B cell (primary cell): ENCODE measurements at regions of chr5 and their contacts with region 1.

Region 1: GRCh38 chr5:141923448-141924352 is at the start of gene DELE1:
- DNase-seq: peak; percentile 94
- ATAC-seq: peak; percentile 94
- H3K4me3 ChIP-seq: peak within 1 kb of the TSS; percentile 63 to 92 (median 85)
- H3K4me3 Mint-ChIP-seq: peak within 1 kb of the TSS; percentile 92
- H3K27ac ChIP-seq: peak within 1 kb of the TSS; percentile 95 to 98
- H3K27ac Mint-ChIP-seq: peak within 1 kb of the TSS; percentile 96
- H3K4me1 ChIP-seq: peaks cover 12 to 18% of the 10 kb centered on the region in 2 donors
- H3K4me1 Mint-ChIP-seq: peaks cover 20% of the 10 kb centered on the region
- H3K27me3 ChIP-seq: no peaks in the 10 kb centered on the region
- H3K27me3 Mint-ChIP-seq: no peaks in the 10 kb centered on the region
- CTCF ChIP-seq: no peak
- total RNA-seq, gene DELE1: 124 and 134 TPM in 2 replicates

Region 2: DNA sequence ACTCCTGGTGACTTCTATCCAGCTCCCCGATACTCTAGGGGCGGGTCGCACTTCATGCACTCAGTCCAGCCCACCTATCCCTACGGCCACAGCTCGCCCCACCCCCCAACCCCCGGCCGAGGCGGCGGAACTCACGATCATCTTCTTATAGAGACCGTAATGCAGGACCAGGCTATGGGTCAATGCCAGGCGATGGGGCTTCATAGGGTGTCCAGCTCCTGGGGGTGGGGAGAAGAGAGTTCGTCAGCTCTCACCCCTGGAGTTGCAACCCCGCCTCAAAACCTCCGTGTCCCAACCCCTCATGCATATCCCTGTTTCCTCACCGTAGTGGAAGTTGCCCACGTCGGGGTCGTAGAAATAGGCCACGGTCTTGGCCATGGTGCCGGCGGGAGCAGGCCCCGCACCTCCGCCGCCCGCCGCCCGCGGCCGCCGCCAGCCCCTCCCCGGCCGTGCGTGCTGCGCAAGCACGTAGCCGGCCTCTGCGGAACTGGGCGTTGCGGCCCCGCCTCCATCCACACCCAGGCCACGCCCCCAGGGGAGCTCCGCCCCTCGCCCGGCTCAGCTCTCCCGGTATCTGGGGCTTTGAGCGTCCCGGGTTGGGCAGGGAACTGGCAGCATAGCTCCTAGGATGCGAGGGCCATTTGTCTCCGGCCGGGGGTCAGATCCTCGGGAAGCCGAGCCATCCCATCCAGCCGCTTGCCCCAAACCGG is 287.1 kb before region 1 on chr5 and contains the starts of genes HDAC3 and RELL2:
- CTCF ChIA-PET with region 1: no interaction called
- POLR2A ChIA-PET with region 1: no interaction called
- intact Hi-C with region 1: loop called (anchors 1 kb)
- DNase-seq: peak; percentile 94
- ATAC-seq: peak; percentile 89
- H3K4me3 ChIP-seq: peak within 1 kb of the TSS; percentile 70 to 99 (median 82)
- H3K4me3 Mint-ChIP-seq: peak within 1 kb of the TSS; percentile 94
- H3K27ac ChIP-seq: peak within 1 kb of the TSS; percentile 58 to 77
- H3K27ac Mint-ChIP-seq: peak within 1 kb of the TSS; percentile 85
- H3K4me1 ChIP-seq: peaks cover 30 to 36% of the 10 kb centered on the region in 2 donors
- H3K4me1 Mint-ChIP-seq: peaks cover 39% of the 10 kb centered on the region
- H3K27me3 ChIP-seq: no peaks in the 10 kb centered on the region
- H3K27me3 Mint-ChIP-seq: no peaks in the 10 kb centered on the region
- CTCF ChIP-seq: no peak
- total RNA-seq, gene HDAC3: 85.5 and 86.9 TPM in 2 replicates
- total RNA-seq, gene RELL2: 11.6 and 12.1 TPM in 2 replicates

Region 3: GRCh38 chr5:141650851-141651727 is 272.6 kb before region 1 on chr5 and contains the start of gene FCHSD1:
- CTCF ChIA-PET with region 1: no interaction called
- POLR2A ChIA-PET with region 1: no interaction called
- intact Hi-C with region 1: loop called (anchors 1 kb)
- DNase-seq: peak; percentile 89
- ATAC-seq: peak; percentile 100
- H3K4me3 ChIP-seq: peak within 1 kb of the TSS; percentile 53 to 84 (median 70)
- H3K4me3 Mint-ChIP-seq: peak within 1 kb of the TSS; percentile 99
- H3K27ac ChIP-seq: peak within 1 kb of the TSS; percentile 60 to 82
- H3K27ac Mint-ChIP-seq: peak within 1 kb of the TSS; percentile 98
- H3K4me1 ChIP-seq: peaks cover 14 to 22% of the 10 kb centered on the region in 2 donors
- H3K4me1 Mint-ChIP-seq: peaks cover 34% of the 10 kb centered on the region
- H3K27me3 ChIP-seq: peaks cover 0 to 8% (median 0%) of the 10 kb centered on the region in 4 experiments
- H3K27me3 Mint-ChIP-seq: peaks cover 7% of the 10 kb centered on the region
- CTCF ChIP-seq: no peak
- total RNA-seq, gene FCHSD1: 114 and 123 TPM in 2 replicates

Region 4: GRCh38 chr5:141849375-141850243 is 74.1 kb before region 1 on chr5:
- CTCF ChIA-PET with region 1: no interaction called
- POLR2A ChIA-PET with region 1: interaction called, 3 read pairs
- intact Hi-C with region 1: loop called (anchors 2 kb)
- DNase-seq: peak; percentile 79
- ATAC-seq: peak; percentile 83
- H3K4me3 ChIP-seq: peak overlapping the region; percentile 75 to 95 (median 78)
- H3K4me3 Mint-ChIP-seq: peak overlapping the region; percentile 91
- H3K27ac ChIP-seq: peak overlapping the region; percentile 55 to 70
- H3K27ac Mint-ChIP-seq: peak overlapping the region; percentile 88
- H3K4me1 ChIP-seq: peaks cover 9 to 12% of the 10 kb centered on the region in 2 donors
- H3K4me1 Mint-ChIP-seq: peaks cover 9% of the 10 kb centered on the region
- H3K27me3 ChIP-seq: peaks cover 0 to 4% (median 2%) of the 10 kb centered on the region in 4 experiments
- H3K27me3 Mint-ChIP-seq: peaks cover 16% of the 10 kb centered on the region
- CTCF ChIP-seq: no peak

Region 5: GRCh38 chr5:142024771-142025304 is 101.1 kb after region 1 on chr5:
- CTCF ChIA-PET with region 1: no interaction called
- POLR2A ChIA-PET with region 1: no interaction called
- intact Hi-C with region 1: loop called (anchors 2 kb)
- DNase-seq: peak; percentile 85
- ATAC-seq: peak; percentile 100
- H3K4me3 ChIP-seq: peak overlapping the region; percentile 38 to 63 (median 53)
- H3K4me3 Mint-ChIP-seq: peak overlapping the region; percentile 86
- H3K27ac ChIP-seq: peak overlapping the region; percentile 59 to 76
- H3K27ac Mint-ChIP-seq: peak overlapping the region; percentile 92
- H3K4me1 ChIP-seq: peaks cover 8 to 9% of the 10 kb centered on the region in 2 donors
- H3K4me1 Mint-ChIP-seq: peaks cover 12% of the 10 kb centered on the region
- H3K27me3 ChIP-seq: peaks cover 0 to 9% (median 5%) of the 10 kb centered on the region in 4 experiments
- H3K27me3 Mint-ChIP-seq: peaks cover 26% of the 10 kb centered on the region
- CTCF ChIP-seq: no peak